Activated naive CD4-positive, alpha-beta T cell treated with anti-CD3 and anti-CD28 coated beads for 36 hours (primary cell): ENCODE measurements at regions of chr4 and their contacts with region 1.

Region 1: GRCh38 chr4:87390891-87391575 is at the start of gene HSD17B11:
- DNase-seq: peak; percentile 85
- H3K4me3 Mint-ChIP-seq: peak within 1 kb of the TSS; percentile 78
- H3K27ac Mint-ChIP-seq: peak within 1 kb of the TSS; percentile 82
- H3K4me1 Mint-ChIP-seq: peaks cover 31% of the 10 kb centered on the region
- H3K27me3 Mint-ChIP-seq: no peaks in the 10 kb centered on the region
- total RNA-seq, gene HSD17B11: 14.2 to 15.9 TPM

Region 2: DNA sequence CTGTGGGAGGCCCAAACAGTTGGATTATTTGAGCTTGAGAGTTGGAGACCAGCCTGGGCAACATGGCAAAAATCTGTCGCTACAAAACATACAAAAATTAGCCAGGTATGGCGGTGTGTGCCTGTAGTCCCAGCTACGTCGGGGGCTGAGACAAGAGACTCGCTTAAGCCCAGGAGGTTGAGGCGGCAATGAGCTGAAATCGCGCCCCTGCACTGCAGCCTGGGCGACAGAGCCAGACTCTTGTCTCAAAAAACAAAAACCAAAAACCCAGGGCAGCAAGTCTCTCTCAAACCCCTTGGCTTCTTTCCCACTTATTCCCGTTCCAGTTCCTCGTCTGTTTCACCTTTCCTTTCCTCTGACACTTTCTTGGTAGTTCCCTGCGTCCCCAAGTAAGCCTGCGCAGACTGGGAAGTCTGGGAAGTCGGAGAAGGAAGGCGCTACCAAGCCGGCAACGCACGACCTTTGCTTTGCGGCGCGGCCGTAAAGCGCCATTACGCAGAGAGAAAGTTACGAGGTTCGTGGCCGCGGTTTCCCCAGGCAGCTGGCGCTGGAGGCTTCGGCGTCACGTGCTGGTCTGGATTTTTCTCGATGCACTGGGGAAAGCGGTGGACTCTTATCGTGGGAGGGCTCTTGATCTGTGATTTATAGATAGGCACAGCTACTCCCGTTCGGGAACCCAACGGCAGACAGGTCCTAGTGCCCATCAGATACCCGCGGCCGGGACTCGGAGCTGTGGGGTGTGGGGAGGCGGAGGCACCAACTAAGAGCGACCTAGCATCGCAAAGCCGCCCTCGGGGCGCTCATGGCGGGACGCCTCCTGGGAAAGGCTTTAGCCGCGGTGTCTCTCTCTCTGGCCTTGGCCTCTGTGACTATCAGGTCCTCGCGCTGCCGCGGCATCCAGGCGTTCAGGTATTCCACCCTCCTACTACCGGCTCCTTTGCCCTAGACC is 31.3 kb after region 1 on chr4 and contains the start of gene NUDT9:
- CTCF ChIA-PET with region 1: interaction called, 6 read pairs
- intact Hi-C with region 1: loop called (anchors 1 kb)
- DNase-seq: peak; percentile 91
- H3K4me3 Mint-ChIP-seq: peak within 1 kb of the TSS; percentile 98
- H3K27ac Mint-ChIP-seq: peak within 1 kb of the TSS; percentile 97
- H3K4me1 Mint-ChIP-seq: peaks cover 32% of the 10 kb centered on the region
- H3K27me3 Mint-ChIP-seq: no peaks in the 10 kb centered on the region
- total RNA-seq, gene NUDT9: 12.1 to 13.4 TPM

Region 3: DNA sequence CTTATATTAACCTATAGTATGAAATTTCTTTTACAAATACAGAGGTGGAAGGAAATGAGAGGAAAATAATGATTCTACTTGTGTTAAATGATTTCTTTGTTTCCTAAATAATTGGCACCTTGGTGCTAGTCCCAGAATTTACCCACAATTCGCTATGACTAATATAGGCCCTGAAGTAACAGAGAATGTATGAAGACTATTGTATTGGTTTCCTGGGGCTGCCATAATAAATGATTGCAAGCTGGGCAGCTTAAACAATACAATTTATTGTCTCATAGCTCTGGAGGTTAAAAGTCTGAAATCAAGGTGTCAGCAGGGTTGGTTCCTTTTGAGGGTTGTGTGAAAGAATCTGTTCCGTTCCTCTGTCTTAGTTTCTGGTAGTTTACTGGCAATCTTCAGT is 1991.4 kb after region 1 on chr4:
- CTCF ChIA-PET with region 1: no interaction called
- intact Hi-C with region 1: no loop called
- DNase-seq: no peak
- H3K4me3 Mint-ChIP-seq: no peak overlapping the region
- H3K27ac Mint-ChIP-seq: no peak overlapping the region
- H3K4me1 Mint-ChIP-seq: no peaks in the 10 kb centered on the region
- H3K27me3 Mint-ChIP-seq: no peaks in the 10 kb centered on the region